Posterior cingulate gyrus (tissue), 11 donors: ENCODE measurements at regions of chr2 and their contacts with region 1.

Region 1: GRCh38 chr2:4175343-4175742 is 472.0 kb downstream of the DCDC2C start:
- DNase-seq: no peak

Region 2: DNA sequence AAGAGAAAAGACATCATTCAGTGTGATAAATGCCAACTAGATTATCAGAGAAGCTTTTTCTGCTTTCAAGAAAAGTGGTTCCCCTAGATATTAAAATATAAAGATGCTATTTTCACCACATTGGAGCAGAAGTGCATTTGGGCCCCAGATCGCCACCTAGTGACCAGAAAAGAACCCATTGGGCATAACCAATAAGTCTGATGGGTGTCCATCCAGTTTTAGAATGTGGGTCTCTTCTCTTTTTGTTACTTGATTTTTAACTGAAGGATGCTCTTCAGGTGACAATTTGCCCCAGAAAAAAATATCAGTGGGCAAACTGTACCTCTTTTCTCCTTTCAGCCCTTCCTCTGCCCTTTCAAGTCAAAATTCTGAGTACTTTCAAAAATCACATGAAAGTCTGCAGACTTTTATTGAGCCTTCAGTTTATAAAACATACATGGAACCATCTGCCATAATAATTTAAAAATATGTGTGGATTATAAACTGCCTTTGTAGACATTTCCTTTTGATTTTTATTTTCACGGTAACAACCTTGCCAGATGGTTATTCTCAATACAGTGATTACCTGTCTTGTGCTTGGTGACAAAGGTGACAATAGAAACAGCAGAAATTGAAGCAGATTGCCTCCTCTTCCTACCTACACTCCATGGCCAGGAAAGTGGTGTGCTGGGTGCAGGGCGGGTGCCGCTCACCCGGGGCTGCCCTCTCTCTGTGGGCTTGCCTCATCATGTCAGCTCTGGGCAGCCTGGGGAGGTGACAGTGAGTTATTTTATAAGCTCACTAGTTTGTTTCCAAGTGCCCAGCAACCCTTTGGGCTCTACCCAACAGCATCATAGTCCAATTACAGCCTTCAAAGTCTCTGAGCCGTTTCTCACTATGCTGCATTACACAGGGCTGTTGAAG is 347.4 kb before region 1 on chr2:
- intact Hi-C with region 1: no loop called
- DNase-seq: peak in 3 of 10 donors; percentile 20 to 37 (median 22)

Region 3: GRCh38 chr2:4164236-4164635 is 11.1 kb before region 1 on chr2:
- intact Hi-C with region 1: loop called (anchors 1 kb)
- DNase-seq: no peak